PC-3 (cell line): ENCODE measurements at regions of chr5 and their contacts with region 1.

Region 1: GRCh38 chr5:38922199-38922598 is 76.4 kb downstream of the OSMR start:
- DNase-seq: peak; percentile 73
- ATAC-seq: peak; percentile 98
- H3K4me3 ChIP-seq: no peak overlapping the region
- H3K27ac ChIP-seq: no peak overlapping the region
- H3K4me1 ChIP-seq: no peaks in the 10 kb centered on the region
- H3K27me3 ChIP-seq: no peaks in the 10 kb centered on the region
- CTCF ChIP-seq: peak; percentile 99

Region 2: DNA sequence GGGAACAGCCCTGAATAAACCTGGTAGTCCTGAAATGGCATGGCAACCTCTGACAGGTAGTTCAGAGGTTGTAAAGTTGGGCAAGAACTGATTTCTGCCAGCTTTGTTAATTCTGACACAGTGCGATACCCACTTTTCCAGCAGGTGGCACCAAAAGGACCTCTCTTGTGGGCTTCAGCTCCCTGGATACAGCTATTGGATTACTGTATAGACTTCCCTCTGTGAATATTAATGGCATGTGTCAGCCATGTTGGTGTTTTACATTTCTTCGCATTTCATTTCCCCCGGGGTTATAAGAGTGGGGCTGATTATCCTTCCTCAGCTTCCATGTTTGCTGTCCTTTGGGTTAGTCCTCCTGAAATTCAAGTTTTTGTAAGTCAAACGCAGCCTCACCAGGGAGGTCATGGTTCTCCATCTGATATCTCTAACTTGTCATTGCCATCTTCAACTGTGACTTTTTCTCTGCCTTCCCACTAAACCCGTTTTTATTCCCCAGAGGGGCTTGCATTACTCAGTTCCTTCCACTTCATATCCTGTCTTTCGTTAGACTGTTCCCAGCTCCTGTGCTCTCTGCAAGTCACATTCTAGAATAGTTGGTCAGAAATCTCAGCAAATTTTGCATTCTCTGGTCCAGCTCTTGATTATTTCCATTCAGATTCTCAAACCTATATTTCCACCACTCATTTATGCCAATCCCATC is 501.4 kb before region 1 on chr5:
- CTCF ChIA-PET with region 1: no interaction called
- POLR2A ChIA-PET with region 1: no interaction called
- intact Hi-C with region 1: loop called (anchors 1 kb)
- DNase-seq: peak; percentile 83
- ATAC-seq: peak; percentile 87
- H3K4me3 ChIP-seq: no peak overlapping the region
- H3K27ac ChIP-seq: no peak overlapping the region
- H3K4me1 ChIP-seq: peaks cover 5% of the 10 kb centered on the region
- H3K27me3 ChIP-seq: peaks cover 3% of the 10 kb centered on the region; the same call in 1 of the 2 replicates
- CTCF ChIP-seq: peak; percentile 92

Region 3: GRCh38 chr5:38672059-38672788 is 250.0 kb before region 1 on chr5:
- CTCF ChIA-PET with region 1: no interaction called
- POLR2A ChIA-PET with region 1: no interaction called
- intact Hi-C with region 1: loop called (anchors 5 kb)
- DNase-seq: peak; percentile 89
- ATAC-seq: peak; percentile 85
- H3K4me3 ChIP-seq: no peak overlapping the region
- H3K27ac ChIP-seq: no peak overlapping the region
- H3K4me1 ChIP-seq: peaks cover 28% of the 10 kb centered on the region
- H3K27me3 ChIP-seq: no peaks in the 10 kb centered on the region
- CTCF ChIP-seq: no peak

Region 4: GRCh38 chr5:38831909-38832308 is 90.3 kb before region 1 on chr5:
- CTCF ChIA-PET with region 1: interaction called, 3 read pairs
- POLR2A ChIA-PET with region 1: no interaction called
- intact Hi-C with region 1: loop called (anchors 2 kb)
- DNase-seq: peak; percentile 58
- ATAC-seq: no peak
- H3K4me3 ChIP-seq: no peak overlapping the region
- H3K27ac ChIP-seq: no peak overlapping the region
- H3K4me1 ChIP-seq: peaks cover 46% of the 10 kb centered on the region
- H3K27me3 ChIP-seq: no peaks in the 10 kb centered on the region
- CTCF ChIP-seq: peak; percentile 73

Region 5: DNA sequence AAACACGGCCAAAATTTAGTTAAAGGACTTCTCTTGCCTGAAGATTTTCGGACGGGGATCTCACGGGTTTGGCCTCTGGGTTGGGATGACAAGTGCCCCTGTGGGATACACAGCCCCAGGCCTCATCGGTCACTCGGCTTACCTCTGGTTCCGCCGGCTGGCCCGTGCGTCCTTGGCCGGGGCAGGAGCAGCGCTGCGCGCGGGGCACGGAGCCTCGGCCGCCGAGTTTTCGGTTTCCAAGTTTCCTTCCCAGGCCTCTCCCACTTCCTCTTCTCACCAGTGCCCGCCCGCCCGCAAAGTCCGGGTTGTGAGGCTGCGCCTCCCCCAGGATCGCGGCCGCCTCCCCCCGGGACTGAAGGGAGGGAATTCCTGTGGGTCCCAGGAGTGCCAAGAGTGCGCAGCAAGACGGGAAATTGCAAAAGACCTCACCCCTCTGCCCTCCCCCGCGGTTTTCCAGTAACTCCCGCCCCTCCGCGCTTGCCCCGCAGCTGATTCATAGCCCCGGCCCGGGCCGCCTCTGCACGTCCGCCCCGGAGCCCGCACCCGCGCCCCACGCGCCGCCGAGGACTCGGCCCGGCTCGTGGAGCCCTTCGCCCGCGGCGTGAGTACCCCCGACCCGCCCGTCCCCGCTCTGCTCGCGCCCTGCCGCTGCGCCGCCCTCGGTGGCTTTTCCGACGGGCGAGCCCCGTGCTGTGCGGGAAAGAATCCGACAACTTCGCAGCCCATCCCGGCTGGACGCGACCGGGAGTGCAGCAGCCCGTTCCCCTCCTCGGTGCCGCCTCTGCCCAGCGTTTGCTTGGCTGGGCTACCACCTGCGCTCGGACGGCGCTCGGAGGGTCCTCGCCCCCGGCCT is 76.4 kb before region 1 on chr5 and contains the start of gene OSMR:
- CTCF ChIA-PET with region 1: interaction called, 4 read pairs
- POLR2A ChIA-PET with region 1: no interaction called
- intact Hi-C with region 1: loop called (anchors 5 kb)
- DNase-seq: peak; percentile 98
- ATAC-seq: peak; percentile 91
- H3K4me3 ChIP-seq: peak within 1 kb of the TSS; percentile 89
- H3K27ac ChIP-seq: peak within 1 kb of the TSS; percentile 87
- H3K4me1 ChIP-seq: peaks cover 28% of the 10 kb centered on the region
- H3K27me3 ChIP-seq: no peaks in the 10 kb centered on the region
- CTCF ChIP-seq: no peak
- total RNA-seq, gene OSMR: 13.7 and 20.3 TPM in 2 replicates